ENCODE measurements at regions of chr5 and their contacts with region 1.

Region 1: GRCh38 chr5:109688971-109689739 is 572 bp upstream of the MAN2A1 start:
- DNase-seq: peak; percentile 81
- H3K4me3 Mint-ChIP-seq: peak overlapping the region; percentile 89
- H3K27ac Mint-ChIP-seq: peak overlapping the region; percentile 92
- H3K4me1 Mint-ChIP-seq: peaks cover 31% of the 10 kb centered on the region
- H3K27me3 Mint-ChIP-seq: no peaks in the 10 kb centered on the region

Region 2: DNA sequence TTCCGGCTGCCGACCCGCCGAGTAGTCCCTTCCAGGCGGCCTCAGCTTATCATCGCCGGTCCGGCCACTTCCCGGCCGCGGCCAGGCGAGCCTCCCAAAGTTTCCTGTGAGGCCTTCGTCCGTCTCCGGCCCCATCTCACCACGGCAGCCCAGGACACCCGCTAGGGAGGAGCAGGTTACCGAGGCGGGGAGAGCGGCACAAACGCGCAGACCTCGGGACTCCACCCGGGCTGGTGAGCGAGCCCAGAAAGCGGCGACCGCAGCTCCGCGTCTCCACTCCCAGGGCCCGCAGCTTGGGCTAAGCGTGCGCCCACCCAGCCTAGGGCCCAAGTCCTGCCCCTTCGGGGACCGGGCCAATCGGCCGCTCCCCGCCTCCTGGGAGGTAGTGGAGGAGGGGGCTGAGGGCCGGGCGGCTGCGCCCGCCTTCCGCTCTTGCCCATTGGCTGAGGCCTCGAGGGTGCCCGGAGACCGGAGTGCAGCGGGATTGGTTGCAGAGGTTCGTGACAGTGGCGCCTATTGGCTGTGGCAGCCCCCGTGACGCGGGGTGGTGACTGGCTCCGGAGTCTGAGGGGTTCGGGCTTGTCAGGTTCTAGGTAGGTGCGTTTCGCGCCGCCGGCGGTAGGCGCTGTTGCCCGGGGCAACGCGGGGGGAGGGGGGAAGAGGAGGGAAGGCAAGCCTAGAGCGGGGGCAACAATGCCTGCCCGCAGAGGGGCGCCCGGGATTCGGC is 940.6 kb before region 1 on chr5:
- CTCF ChIA-PET with region 1: no interaction called
- intact Hi-C with region 1: loop called (anchors 2 kb)
- DNase-seq: peak; percentile 98
- H3K4me3 Mint-ChIP-seq: peak overlapping the region; percentile 85
- H3K27ac Mint-ChIP-seq: peak overlapping the region; percentile 88
- H3K4me1 Mint-ChIP-seq: peaks cover 17% of the 10 kb centered on the region
- H3K27me3 Mint-ChIP-seq: no peaks in the 10 kb centered on the region

Region 3: DNA sequence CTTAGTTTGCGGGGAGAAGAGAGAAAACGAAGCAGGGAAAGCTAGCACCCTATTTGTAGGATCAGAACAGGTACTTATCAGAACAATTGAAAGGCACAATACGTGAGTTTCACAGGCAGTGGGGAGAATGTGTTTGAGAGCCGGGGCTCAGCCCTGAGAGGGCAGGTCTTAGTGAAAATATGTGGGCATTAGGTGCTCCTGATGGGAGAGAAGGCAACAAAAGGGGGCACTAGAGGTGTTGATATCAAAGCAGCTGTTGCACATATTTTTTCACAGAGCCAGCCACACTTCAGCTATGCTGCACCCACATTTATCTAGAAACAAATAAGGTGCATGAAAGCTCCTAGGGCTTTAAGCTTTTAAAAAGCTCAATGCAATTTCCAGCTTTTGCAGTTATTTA is 99.2 kb before region 1 on chr5:
- CTCF ChIA-PET with region 1: interaction called, 3 read pairs
- intact Hi-C with region 1: loop called (anchors 1 kb)
- DNase-seq: peak; percentile 11
- H3K4me3 Mint-ChIP-seq: no peak overlapping the region
- H3K27ac Mint-ChIP-seq: no peak overlapping the region
- H3K4me1 Mint-ChIP-seq: peaks cover 13% of the 10 kb centered on the region
- H3K27me3 Mint-ChIP-seq: peaks cover 1% of the 10 kb centered on the region

Region 4: GRCh38 chr5:109936996-109937395 is 247.8 kb after region 1 on chr5:
- CTCF ChIA-PET with region 1: no interaction called
- intact Hi-C with region 1: loop called (anchors 1 kb)
- DNase-seq: peak; percentile 81
- H3K4me3 Mint-ChIP-seq: peak overlapping the region; percentile 17
- H3K27ac Mint-ChIP-seq: peak overlapping the region; percentile 80
- H3K4me1 Mint-ChIP-seq: peaks cover 29% of the 10 kb centered on the region
- H3K27me3 Mint-ChIP-seq: no peaks in the 10 kb centered on the region

Region 5: DNA sequence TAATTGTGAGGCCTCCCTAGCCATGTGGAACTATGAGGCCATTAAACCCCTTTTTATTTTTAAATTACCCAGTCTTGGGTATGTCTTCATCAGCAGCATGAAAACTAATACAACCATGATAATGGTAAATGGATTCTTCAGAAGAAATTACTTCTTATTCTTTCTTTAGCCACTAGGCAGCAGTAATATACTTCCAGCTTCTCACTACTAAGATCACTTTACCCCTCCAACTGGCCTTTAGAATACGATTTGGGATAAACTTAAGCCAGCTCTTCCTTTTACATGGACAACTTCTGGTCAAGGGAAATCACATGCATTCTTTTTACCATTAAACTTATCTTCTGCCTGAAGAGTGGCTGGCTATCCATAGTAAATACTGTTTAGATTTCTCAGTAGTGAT is 356.0 kb after region 1 on chr5:
- CTCF ChIA-PET with region 1: no interaction called
- intact Hi-C with region 1: no loop called
- DNase-seq: no peak
- H3K4me3 Mint-ChIP-seq: no peak overlapping the region
- H3K27ac Mint-ChIP-seq: no peak overlapping the region
- H3K4me1 Mint-ChIP-seq: peaks cover 17% of the 10 kb centered on the region
- H3K27me3 Mint-ChIP-seq: no peaks in the 10 kb centered on the region

Region 6: GRCh38 chr5:110105692-110106091 is 416.5 kb after region 1 on chr5:
- CTCF ChIA-PET with region 1: no interaction called
- intact Hi-C with region 1: no loop called
- DNase-seq: no peak
- H3K4me3 Mint-ChIP-seq: no peak overlapping the region
- H3K27ac Mint-ChIP-seq: no peak overlapping the region
- H3K4me1 Mint-ChIP-seq: peaks cover 39% of the 10 kb centered on the region
- H3K27me3 Mint-ChIP-seq: no peaks in the 10 kb centered on the region

Region 7: DNA sequence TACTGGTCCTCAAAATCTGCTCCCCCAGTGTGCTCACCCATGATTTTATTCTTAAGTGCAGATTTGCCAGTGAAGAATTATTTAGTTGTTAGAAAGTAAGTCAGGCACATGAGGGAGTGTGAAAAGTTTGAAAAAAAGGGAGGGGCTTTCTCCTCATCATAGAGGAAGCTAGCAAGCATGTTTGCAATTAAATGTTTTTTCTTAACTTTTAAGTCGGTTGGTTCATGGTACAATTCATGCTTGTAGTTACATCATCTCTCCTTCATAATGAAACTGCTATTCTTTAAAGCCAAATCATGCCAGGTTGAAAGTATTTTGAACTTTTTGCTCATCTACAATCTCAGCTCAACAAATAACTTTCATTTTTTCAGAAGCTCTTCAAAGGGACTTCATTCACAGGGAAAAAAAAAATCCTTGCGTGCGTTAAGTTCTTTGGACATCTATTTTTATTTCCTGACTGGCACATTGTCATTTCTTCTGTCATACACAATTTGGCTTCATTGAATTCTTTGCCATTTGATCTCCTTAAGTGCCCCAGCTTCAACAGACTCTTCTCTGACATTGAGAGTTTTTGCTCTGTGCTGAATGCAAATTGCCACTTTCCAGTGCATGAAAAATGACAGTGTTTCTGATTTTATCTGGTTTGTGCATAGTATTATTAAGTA is 580.5 kb after region 1 on chr5:
- CTCF ChIA-PET with region 1: no interaction called
- intact Hi-C with region 1: loop called (anchors 1 kb)
- DNase-seq: no peak
- H3K4me3 Mint-ChIP-seq: peak overlapping the region; percentile 3
- H3K27ac Mint-ChIP-seq: peak overlapping the region; percentile 73
- H3K4me1 Mint-ChIP-seq: peaks cover 12% of the 10 kb centered on the region
- H3K27me3 Mint-ChIP-seq: no peaks in the 10 kb centered on the region

Region 8: GRCh38 chr5:110738812-110739651 is 1049.9 kb after region 1 on chr5 and contains the start of gene SLC25A46:
- CTCF ChIA-PET with region 1: no interaction called
- intact Hi-C with region 1: loop called (anchors 5 kb)
- DNase-seq: peak; percentile 89
- H3K4me3 Mint-ChIP-seq: peak within 1 kb of the TSS; percentile 96
- H3K27ac Mint-ChIP-seq: peak within 1 kb of the TSS; percentile 86
- H3K4me1 Mint-ChIP-seq: peaks cover 25% of the 10 kb centered on the region
- H3K27me3 Mint-ChIP-seq: peaks cover 8% of the 10 kb centered on the region
- total RNA-seq, gene SLC25A46: 26.1 to 27.2 TPM